Activated CD4-positive, alpha-beta memory T cell treated with anti-CD3 and anti-CD28 coated beads, Interleukin-2, amount 10 ng/mL, durations not matched to agents 7 days and 5 days (primary cell): ENCODE measurements at regions of chr14 and their contacts with region 1.

Region 1: GRCh38 chr14:39114073-39114838 is at the start of gene GEMIN2:
- DNase-seq: peak; percentile 96
- H3K4me3 Mint-ChIP-seq: peak within 1 kb of the TSS; percentile 91
- H3K27ac Mint-ChIP-seq: peak within 1 kb of the TSS; percentile 93
- H3K4me1 Mint-ChIP-seq: peaks cover 38% of the 10 kb centered on the region
- H3K27me3 Mint-ChIP-seq: no peaks in the 10 kb centered on the region
- total RNA-seq, gene GEMIN2: 18.3 to 22.4 TPM

Region 2: DNA sequence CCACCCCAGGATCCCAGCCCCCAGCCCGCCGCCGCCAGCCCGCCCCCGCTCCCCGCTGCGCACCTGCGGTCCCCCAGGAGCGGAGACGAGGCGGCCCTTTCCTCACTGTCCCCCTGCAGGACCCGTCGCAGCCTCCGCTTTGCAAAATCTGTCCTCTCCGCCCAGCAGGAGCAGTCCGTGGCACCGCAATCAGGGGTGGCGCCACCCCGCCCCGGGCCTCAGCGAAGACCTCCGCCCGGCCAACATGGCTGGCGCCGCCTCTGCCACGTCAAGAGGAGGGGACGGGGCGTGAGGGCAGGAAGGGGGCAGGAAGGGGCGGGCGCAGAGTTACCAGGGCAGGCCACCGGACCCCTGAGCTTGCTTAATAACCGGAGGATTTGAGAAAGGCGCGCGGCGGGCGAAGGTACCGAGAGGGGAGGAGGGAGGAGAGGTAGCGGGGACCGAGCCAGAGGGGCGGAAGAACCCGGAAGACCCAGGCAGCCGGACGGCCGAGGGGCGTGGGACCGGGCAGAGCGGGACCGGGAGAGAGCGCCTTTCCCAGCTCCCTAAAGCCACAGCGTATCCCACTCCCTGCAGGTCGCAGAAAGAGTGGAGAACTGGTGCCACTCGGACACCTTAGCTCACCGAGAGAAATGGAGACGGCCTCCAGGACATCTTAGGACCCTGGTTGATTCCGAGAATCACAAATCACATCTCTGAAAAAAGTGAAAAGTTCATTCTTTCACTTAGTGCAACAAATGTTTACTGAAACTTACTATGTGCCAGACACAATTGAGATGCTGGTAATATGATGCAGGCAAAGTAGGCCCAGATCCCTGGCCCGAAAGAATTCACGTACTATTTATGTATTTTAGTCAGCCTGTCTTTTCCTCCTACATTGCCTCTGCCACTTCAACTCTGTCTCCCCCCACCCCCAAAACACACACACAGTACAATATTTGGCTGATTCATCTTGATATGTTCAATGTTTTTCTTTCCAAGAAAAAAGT is 11.0 kb before region 1 on chr14 and contains the start of gene SEC23A:
- CTCF ChIA-PET with region 1: interaction called, 8 read pairs
- POLR2A ChIA-PET with region 1: interaction called, 58 read pairs
- DNase-seq: peak; percentile 88
- H3K4me3 Mint-ChIP-seq: peak within 1 kb of the TSS; percentile 97
- H3K27ac Mint-ChIP-seq: peak within 1 kb of the TSS; percentile 91
- H3K4me1 Mint-ChIP-seq: peaks cover 47% of the 10 kb centered on the region
- H3K27me3 Mint-ChIP-seq: no peaks in the 10 kb centered on the region
- total RNA-seq, gene SEC23A: 59.7 to 69.0 TPM

Region 3: DNA sequence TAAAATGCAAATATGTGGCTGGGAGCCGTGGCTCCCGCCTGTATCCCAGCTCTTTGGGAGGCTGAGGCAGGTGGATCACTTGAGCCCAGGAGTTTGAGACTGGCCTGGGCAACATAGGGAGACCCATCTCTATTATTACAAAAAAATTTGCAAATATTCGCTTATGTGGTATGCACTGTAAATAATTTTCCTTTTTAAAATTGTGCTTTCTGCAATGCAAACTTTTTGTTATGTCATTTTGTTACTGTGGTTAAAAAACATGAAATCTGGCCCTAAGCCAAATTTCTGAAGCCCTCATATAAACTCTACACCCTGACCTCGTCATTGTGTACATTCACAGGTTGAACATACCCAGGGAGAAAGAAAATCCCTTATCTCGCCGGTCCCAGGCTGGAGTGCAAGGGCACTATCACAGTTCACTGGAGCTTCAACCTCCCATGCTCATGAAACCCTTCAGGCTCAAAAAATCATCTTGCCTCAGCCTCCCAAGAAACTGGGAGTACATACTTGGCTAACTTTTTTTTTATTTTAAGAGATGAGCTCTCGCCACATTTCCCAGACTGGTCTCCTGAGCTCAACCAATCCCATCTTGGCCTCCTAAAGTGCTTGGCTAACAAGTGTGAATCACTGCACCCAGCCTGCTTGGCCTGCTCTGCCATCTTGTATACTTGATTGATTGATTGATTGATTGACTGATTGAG is 31.2 kb after region 1 on chr14:
- CTCF ChIA-PET with region 1: no interaction called
- POLR2A ChIA-PET with region 1: no interaction called
- DNase-seq: no peak
- H3K4me3 Mint-ChIP-seq: no peak overlapping the region
- H3K27ac Mint-ChIP-seq: no peak overlapping the region
- H3K4me1 Mint-ChIP-seq: no peaks in the 10 kb centered on the region
- H3K27me3 Mint-ChIP-seq: no peaks in the 10 kb centered on the region

Region 4: GRCh38 chr14:39169541-39169900 is 55.3 kb after region 1 on chr14:
- CTCF ChIA-PET with region 1: interaction called, 12 read pairs
- POLR2A ChIA-PET with region 1: interaction called, 47 read pairs
- DNase-seq: no peak
- H3K4me3 Mint-ChIP-seq: peak overlapping the region; percentile 84
- H3K27ac Mint-ChIP-seq: peak overlapping the region; percentile 98
- H3K4me1 Mint-ChIP-seq: peaks cover 59% of the 10 kb centered on the region
- H3K27me3 Mint-ChIP-seq: no peaks in the 10 kb centered on the region

Region 5: GRCh38 chr14:39174560-39175444 is 60.5 kb after region 1 on chr14 and contains the start of gene PNN:
- CTCF ChIA-PET with region 1: interaction called, 12 read pairs
- POLR2A ChIA-PET with region 1: interaction called, 47 read pairs
- DNase-seq: peak; percentile 98
- H3K4me3 Mint-ChIP-seq: peak within 1 kb of the TSS; percentile 96
- H3K27ac Mint-ChIP-seq: peak within 1 kb of the TSS; percentile 94
- H3K4me1 Mint-ChIP-seq: peaks cover 57% of the 10 kb centered on the region
- H3K27me3 Mint-ChIP-seq: no peaks in the 10 kb centered on the region
- total RNA-seq, gene PNN: 75.0 to 75.3 TPM

Region 6: DNA sequence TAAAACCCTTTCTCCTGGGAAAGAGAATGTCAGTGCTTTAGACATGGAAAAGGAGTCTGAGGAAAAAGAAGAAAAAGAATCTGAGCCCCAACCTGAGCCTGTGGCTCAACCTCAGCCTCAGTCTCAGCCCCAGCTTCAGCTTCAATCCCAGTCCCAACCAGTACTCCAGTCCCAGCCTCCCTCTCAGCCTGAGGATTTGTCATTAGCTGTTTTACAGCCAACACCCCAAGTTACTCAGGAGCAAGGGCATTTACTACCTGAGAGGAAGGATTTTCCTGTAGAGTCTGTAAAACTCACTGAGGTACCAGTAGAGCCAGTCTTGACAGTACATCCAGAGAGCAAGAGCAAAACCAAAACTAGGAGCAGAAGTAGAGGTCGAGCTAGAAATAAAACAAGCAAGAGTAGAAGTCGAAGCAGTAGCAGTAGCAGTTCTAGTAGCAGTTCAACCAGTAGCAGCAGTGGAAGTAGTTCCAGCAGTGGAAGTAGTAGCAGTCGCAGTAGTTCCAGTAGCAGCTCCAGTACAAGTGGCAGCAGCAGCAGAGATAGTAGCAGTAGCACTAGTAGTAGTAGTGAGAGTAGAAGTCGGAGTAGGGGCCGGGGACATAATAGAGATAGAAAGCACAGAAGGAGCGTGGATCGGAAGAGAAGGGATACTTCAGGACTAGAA is 66.9 kb after region 1 on chr14:
- CTCF ChIA-PET with region 1: no interaction called
- POLR2A ChIA-PET with region 1: interaction called, 12 read pairs
- DNase-seq: no peak
- H3K4me3 Mint-ChIP-seq: no peak overlapping the region
- H3K27ac Mint-ChIP-seq: no peak overlapping the region
- H3K4me1 Mint-ChIP-seq: peaks cover 39% of the 10 kb centered on the region
- H3K27me3 Mint-ChIP-seq: no peaks in the 10 kb centered on the region

Region 7: DNA sequence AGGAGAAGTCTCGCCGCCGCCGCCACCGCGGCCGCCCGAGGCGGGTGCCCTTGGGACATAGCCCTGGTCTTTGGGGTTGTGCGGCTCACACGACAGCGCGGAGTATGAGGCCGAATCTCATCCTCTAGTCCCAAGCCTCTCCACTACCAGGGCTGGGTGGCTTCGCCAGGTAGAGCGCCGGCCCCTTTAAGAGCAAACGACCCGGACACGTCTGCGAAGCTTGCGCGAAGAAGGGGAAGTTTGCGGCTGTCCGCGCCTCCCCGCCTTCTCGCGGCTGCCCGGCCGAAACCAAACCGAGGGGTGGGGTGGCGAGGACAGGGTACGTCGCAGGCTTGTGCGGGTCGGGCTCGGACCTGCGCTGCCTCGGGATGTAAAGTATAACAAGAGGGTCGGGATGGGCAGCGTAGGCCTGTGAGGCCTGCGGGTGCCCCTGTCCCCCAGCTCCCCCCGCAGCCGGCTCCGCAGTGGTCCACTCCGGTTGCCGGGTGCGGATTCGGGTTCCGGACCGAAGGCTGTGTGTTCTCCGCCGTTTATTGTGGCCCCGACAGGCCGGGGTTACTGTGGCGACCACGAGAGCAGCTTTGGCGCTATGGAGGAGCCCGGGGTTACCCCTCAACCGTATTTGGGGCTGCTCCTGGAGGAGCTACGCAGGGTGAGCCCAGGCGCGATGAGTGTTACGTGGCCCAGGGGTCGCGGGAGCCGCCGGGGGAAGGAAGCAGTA is 152.8 kb after region 1 on chr14:
- CTCF ChIA-PET with region 1: no interaction called
- POLR2A ChIA-PET with region 1: interaction called, 17 read pairs
- DNase-seq: peak; percentile 84
- H3K4me3 Mint-ChIP-seq: peak overlapping the region; percentile 73
- H3K27ac Mint-ChIP-seq: peak overlapping the region; percentile 94
- H3K4me1 Mint-ChIP-seq: peaks cover 50% of the 10 kb centered on the region
- H3K27me3 Mint-ChIP-seq: no peaks in the 10 kb centered on the region